ENCODE measurements at regions of chr10 and their contacts with region 1.

Region 1: GRCh38 chr10:99612167-99612831 is 7.9 kb downstream of the SLC25A28 start:
- DNase-seq: peak; percentile 45
- ATAC-seq: peak; percentile 58
- H3K4me3 Mint-ChIP-seq: no peak overlapping the region
- H3K27ac Mint-ChIP-seq: peak overlapping the region; percentile 6
- H3K4me1 Mint-ChIP-seq: peaks cover 36% of the 10 kb centered on the region
- H3K27me3 Mint-ChIP-seq: no peaks in the 10 kb centered on the region

Region 2: GRCh38 chr10:99394256-99394655 is 218.0 kb before region 1 on chr10:
- CTCF ChIA-PET with region 1: interaction called, 20 read pairs
- DNase-seq: no peak
- ATAC-seq: no peak
- H3K4me3 Mint-ChIP-seq: no peak overlapping the region
- H3K27ac Mint-ChIP-seq: no peak overlapping the region
- H3K4me1 Mint-ChIP-seq: peaks cover 6% of the 10 kb centered on the region
- H3K27me3 Mint-ChIP-seq: no peaks in the 10 kb centered on the region

Region 3: GRCh38 chr10:99430451-99431189 is 181.7 kb before region 1 on chr10 and contains the start of gene GOT1:
- CTCF ChIA-PET with region 1: interaction called, 71 read pairs
- DNase-seq: peak; percentile 97
- ATAC-seq: peak; percentile 95
- H3K4me3 Mint-ChIP-seq: peak within 1 kb of the TSS; percentile 87
- H3K27ac Mint-ChIP-seq: peak within 1 kb of the TSS; percentile 89
- H3K4me1 Mint-ChIP-seq: peaks cover 25% of the 10 kb centered on the region
- H3K27me3 Mint-ChIP-seq: no peaks in the 10 kb centered on the region
- total RNA-seq, gene GOT1: 33.2 to 36.5 TPM

Region 4: GRCh38 chr10:99435986-99436638 is 176.2 kb before region 1 on chr10:
- CTCF ChIA-PET with region 1: interaction called, 71 read pairs
- DNase-seq: no peak
- ATAC-seq: no peak
- H3K4me3 Mint-ChIP-seq: no peak overlapping the region
- H3K27ac Mint-ChIP-seq: no peak overlapping the region
- H3K4me1 Mint-ChIP-seq: peaks cover 13% of the 10 kb centered on the region
- H3K27me3 Mint-ChIP-seq: no peaks in the 10 kb centered on the region

Region 5: GRCh38 chr10:99560277-99561126 is 51.8 kb before region 1 on chr10:
- CTCF ChIA-PET with region 1: interaction called, 37 read pairs
- DNase-seq: peak; percentile 56
- ATAC-seq: no peak
- H3K4me3 Mint-ChIP-seq: no peak overlapping the region
- H3K27ac Mint-ChIP-seq: no peak overlapping the region
- H3K4me1 Mint-ChIP-seq: peaks cover 11% of the 10 kb centered on the region
- H3K27me3 Mint-ChIP-seq: peaks cover 51% of the 10 kb centered on the region

Region 6: GRCh38 chr10:99595770-99596465 is 16.4 kb before region 1 on chr10:
- CTCF ChIA-PET with region 1: interaction called, 24 read pairs
- DNase-seq: no peak
- ATAC-seq: no peak
- H3K4me3 Mint-ChIP-seq: no peak overlapping the region
- H3K27ac Mint-ChIP-seq: no peak overlapping the region
- H3K4me1 Mint-ChIP-seq: no peaks in the 10 kb centered on the region
- H3K27me3 Mint-ChIP-seq: peaks cover 12% of the 10 kb centered on the region

Region 7: DNA sequence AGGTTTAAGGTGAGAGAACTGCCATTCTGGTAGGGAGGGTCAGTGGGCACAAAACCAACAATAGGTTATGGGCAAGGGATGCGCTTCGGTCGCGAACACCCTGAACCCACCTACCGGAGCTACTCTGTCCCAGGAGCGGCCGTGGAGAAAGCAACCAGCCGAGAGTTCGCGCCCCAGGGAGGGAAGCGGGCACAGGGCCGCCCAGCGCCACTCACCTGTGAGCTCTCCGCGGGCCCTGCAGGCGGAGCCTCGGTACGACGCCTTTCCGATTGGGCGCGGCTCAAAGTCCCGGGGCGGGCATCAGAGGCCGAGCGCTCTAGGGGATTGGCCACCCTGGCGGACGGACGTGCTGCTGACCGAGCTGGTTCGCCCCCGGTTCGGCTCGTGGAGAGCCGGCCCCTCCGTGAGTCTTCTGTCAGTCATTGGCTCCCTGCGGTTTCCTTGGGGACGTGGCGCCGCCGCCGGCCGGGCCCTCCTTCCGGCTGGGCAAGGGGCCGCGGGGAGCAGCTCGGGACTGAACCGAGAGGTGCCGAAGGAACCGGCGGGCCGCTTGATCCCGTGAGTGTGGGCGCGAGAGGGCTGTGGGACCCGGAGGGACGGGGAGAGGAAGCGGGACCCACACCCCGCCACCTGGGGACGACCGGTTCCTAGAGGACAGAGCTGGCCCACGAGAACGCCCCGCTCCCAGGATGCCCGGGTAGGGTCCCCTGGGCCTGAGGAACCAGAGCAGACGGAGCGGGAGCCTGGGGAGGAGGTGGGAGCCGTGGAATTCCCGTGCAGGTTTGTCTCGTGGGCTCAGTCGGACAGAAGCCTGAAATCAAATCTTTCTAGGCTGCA is 47.0 kb after region 1 on chr10 and contains the start of gene ENTPD7:
- CTCF ChIA-PET with region 1: interaction called, 15 read pairs
- DNase-seq: peak; percentile 96
- ATAC-seq: peak; percentile 99
- H3K4me3 Mint-ChIP-seq: peak within 1 kb of the TSS; percentile 80
- H3K27ac Mint-ChIP-seq: peak within 1 kb of the TSS; percentile 62
- H3K4me1 Mint-ChIP-seq: peaks cover 23% of the 10 kb centered on the region
- H3K27me3 Mint-ChIP-seq: peaks cover 26% of the 10 kb centered on the region
- total RNA-seq, gene ENTPD7: 4.3 to 7.4 TPM